Thyroid gland (tissue), 4 donors: ENCODE measurements at regions of chr13 and their contacts with region 1.

Region 1: DNA sequence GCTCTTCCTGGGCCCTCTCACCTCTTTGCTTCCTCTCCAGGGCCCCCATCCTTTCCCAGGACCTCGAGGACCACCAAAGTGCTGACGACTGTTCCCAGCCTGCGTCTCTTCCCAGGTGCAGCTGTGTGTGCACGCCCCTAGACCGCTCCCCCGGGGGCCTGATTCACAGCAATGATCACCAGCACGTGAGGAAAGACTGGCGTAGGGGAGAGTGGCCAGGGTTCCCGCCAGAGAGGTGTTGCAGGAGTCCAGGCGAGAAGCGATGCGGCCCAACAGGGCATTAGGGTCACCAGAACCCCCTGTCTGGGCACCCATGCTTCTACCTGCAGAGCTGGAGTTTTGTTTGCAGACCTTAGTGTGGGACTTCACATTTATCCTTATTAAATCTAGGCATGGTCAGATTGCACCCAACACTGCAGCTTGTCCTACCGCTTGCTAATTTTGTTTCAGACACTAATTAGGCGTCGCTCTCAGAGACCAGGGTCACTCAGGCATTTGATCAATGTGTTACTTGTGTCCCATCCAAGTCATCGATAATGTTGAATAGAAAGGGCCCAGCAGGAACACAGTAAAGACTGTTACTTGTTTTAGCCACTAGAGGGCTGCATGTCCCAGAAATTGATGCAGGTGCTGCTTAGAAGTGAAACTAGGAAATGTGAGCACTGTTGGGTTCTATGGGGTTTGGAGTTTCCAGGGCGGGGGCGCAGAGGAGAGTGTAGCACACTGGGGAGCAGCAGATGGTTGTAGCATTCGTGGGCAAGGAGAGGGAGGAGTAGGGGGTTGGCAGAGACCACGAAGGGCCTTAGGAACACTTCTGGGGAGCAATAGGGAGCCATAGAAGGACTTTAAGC is 53.2 kb downstream of the CDADC1 start:
- DNase-seq: peak; percentile 41 to 46
- H3K4me3 ChIP-seq: no peak overlapping the region
- H3K27ac ChIP-seq: peak overlapping the region in 2 of 3 donors; percentile 5 to 71
- H3K4me1 ChIP-seq: peaks cover 27 to 54% of the 10 kb centered on the region in 2 donors
- H3K27me3 ChIP-seq: no peaks in the 10 kb centered on the region
- CTCF ChIP-seq: peak; percentile 54 to 95 (median 87)
- POLR2A ChIP-seq: no peak

Region 2: GRCh38 chr13:49190901-49191300 is 110.1 kb before region 1 on chr13:
- intact Hi-C with region 1: no loop called
- DNase-seq: no peak
- H3K4me3 ChIP-seq: no peak overlapping the region
- H3K27ac ChIP-seq: no peak overlapping the region
- H3K4me1 ChIP-seq: no peaks in the 10 kb centered on the region
- H3K27me3 ChIP-seq: no peaks in the 10 kb centered on the region
- CTCF ChIP-seq: no peak
- POLR2A ChIP-seq: no peak

Region 3: DNA sequence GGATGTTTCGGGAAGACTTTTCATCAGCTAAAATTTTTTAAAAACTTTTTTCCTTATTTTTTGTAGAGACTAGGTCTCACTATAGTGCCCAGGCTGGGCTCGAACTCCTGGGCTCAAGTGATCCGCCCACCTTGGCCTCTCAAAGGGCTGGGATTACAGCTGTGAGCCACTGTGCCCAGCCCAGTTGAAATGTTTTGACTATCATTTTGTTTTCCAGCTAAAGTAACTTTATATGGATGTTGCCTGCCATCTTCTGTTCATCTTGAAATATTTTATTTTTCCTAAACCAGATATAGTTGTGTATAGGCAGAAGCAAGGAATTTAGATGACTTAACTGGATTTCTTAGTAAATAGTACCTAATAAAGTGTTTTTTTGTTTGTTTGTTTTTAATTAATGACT is 135.9 kb after region 1 on chr13:
- intact Hi-C with region 1: loop called (anchors 5 kb)
- DNase-seq: peak; percentile 31 to 41
- H3K4me3 ChIP-seq: no peak overlapping the region
- H3K27ac ChIP-seq: no peak overlapping the region
- H3K4me1 ChIP-seq: no peaks in the 10 kb centered on the region
- H3K27me3 ChIP-seq: no peaks in the 10 kb centered on the region
- CTCF ChIP-seq: peak in 4 of 6 experiments; percentile 20 to 62 (median 42)
- POLR2A ChIP-seq: no peak

Region 4: DNA sequence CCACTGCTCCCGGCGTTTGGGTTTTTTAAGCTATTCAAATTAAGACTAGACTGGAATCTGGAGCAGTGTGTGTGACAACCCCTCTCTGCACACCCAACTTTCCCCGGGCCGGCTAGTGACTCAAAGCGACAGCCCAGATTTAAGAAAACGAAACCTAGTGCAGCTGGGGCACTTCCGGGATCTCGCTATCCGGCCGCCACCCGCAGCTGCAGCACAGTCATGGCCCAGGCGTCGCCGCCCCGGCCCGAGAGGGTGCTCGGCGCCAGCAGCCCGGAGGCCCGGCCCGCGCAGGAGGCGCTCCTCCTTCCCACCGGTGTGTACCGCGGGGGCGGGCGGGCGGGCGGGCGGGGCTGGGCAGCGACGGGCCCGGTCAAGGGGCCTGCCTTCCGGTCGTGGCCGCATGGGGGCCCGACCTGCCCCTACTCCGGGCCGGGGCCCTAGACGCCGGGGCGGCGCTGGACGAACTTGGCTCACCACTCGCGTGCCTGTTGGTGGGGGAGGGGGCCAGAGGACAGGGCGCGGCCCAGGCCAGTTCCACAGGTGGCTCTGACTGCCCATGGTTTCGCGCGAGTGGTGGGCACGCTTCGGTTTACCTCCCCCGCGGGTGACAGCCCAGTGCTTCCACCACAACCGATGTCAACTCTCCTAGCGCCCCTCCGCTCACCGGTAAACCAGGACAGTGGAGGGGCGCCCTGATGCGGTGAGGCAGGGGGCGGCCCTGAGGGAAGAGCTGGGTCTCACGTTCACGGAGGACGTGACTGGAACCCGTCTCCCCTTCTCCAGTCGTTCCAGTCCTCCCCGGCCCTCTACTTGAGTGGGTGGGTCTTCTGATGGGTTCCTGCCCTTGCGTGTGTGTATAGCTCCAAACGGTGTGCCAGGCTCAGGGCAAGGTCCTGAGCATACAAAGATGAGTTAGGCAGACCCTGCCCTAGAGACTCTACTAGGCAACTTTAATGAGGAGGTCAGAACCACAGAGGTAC is 195.1 kb after region 1 on chr13 and contains the start of gene PHF11:
- intact Hi-C with region 1: loop called (anchors 10 kb)
- DNase-seq: peak; percentile 95 to 97
- H3K4me3 ChIP-seq: peak within 1 kb of the TSS; percentile 44 to 80 (median 75)
- H3K27ac ChIP-seq: peak within 1 kb of the TSS; percentile 98 to 99 (median 98)
- H3K4me1 ChIP-seq: peaks cover 13 to 25% of the 10 kb centered on the region in 2 donors
- H3K27me3 ChIP-seq: no peaks in the 10 kb centered on the region
- CTCF ChIP-seq: peak in 3 of 6 experiments; percentile 19 to 36 (median 30)
- POLR2A ChIP-seq: peak; percentile 60 to 72
- total RNA-seq, gene PHF11: 53.9 to 71.4 (median 64.2) TPM

Region 5: GRCh38 chr13:49606747-49607648 is 306.0 kb after region 1 on chr13:
- intact Hi-C with region 1: loop called (anchors 5 kb)
- DNase-seq: peak; percentile 90 to 93
- H3K4me3 ChIP-seq: no peak overlapping the region
- H3K27ac ChIP-seq: peak overlapping the region in 2 of 3 donors; percentile 3 to 41
- H3K4me1 ChIP-seq: peaks cover 7 to 17% of the 10 kb centered on the region in 2 donors
- H3K27me3 ChIP-seq: no peaks in the 10 kb centered on the region
- CTCF ChIP-seq: peak; percentile 36 to 85 (median 70)
- POLR2A ChIP-seq: no peak

Region 6: DNA sequence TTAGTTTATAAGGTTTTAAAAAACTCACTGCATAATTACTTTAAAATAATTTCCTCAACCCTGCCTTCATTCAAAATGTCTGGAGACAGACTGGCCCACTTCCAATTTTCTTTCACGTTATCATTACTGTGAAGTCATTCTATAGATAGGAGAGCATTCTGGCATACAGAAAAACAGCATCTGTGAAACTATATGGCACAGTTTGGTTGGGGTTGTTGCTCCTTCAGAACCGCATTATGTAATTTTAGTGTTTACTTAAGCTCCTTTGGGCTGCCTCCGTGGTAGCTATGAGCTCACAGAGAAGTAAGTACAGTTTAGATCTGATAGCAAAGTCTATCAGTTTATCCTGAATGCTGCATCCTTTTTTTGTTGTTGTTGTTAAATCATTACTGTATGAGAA is 818.6 kb after region 1 on chr13:
- intact Hi-C with region 1: no loop called
- DNase-seq: no peak
- H3K4me3 ChIP-seq: no peak overlapping the region
- H3K27ac ChIP-seq: no peak overlapping the region
- H3K4me1 ChIP-seq: peaks cover 0 to 19% of the 10 kb centered on the region in 2 donors
- H3K27me3 ChIP-seq: no peaks in the 10 kb centered on the region
- CTCF ChIP-seq: no peak
- POLR2A ChIP-seq: no peak